ENCODE measurements at regions of chr4 and their contacts with region 1.

Region 1: GRCh38 chr4:80221161-80221560 is 23.9 kb downstream of the PRDM8 start:
- DNase-seq: peak; percentile 61
- ATAC-seq: peak; percentile 60; the same call in 1 of the 2 replicates
- H3K4me3 ChIP-seq: no peak overlapping the region
- H3K27ac ChIP-seq: no peak overlapping the region
- H3K4me1 ChIP-seq: peaks cover 2% of the 10 kb centered on the region; the same call in 1 of the 2 replicates
- H3K27me3 ChIP-seq: no peaks in the 10 kb centered on the region
- CTCF ChIP-seq: peak; percentile 54
- POLR2A ChIP-seq: no peak
- RAD21 ChIP-seq: peak; percentile 49

Region 2: DNA sequence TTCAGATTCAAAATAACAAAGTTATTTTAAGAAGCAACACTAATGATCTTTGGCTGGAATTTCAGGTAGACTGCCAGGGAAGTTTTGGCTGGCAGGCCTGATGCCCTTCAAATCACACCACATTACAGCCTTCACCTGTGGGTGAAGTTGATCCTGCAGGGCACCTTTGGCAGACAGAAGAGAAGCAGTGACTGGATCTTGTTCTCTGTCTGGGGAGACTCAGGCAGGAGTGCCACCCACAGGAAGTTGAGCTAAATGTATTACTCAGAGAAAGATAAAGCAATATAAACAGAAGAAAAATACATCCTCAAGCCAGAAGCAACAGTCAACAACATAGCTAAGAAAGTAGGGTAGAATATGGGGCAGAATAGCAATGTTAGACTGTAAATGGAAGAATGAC is 101.6 kb after region 1 on chr4:
- CTCF ChIA-PET with region 1: interaction called, 15 read pairs
- POLR2A ChIA-PET with region 1: no interaction called
- dilution Hi-C with region 1: no loop called
- in situ Hi-C with region 1: no loop called
- intact Hi-C with region 1: loop called (anchors 1 kb)
- DNase-seq: peak; percentile 68
- ATAC-seq: peak; percentile 97
- H3K4me3 ChIP-seq: no peak overlapping the region
- H3K27ac ChIP-seq: no peak overlapping the region
- H3K4me1 ChIP-seq: peaks cover 5% of the 10 kb centered on the region
- H3K27me3 ChIP-seq: no peaks in the 10 kb centered on the region
- CTCF ChIP-seq: peak; percentile 69
- POLR2A ChIP-seq: no peak
- RAD21 ChIP-seq: peak; percentile 74

Region 3: DNA sequence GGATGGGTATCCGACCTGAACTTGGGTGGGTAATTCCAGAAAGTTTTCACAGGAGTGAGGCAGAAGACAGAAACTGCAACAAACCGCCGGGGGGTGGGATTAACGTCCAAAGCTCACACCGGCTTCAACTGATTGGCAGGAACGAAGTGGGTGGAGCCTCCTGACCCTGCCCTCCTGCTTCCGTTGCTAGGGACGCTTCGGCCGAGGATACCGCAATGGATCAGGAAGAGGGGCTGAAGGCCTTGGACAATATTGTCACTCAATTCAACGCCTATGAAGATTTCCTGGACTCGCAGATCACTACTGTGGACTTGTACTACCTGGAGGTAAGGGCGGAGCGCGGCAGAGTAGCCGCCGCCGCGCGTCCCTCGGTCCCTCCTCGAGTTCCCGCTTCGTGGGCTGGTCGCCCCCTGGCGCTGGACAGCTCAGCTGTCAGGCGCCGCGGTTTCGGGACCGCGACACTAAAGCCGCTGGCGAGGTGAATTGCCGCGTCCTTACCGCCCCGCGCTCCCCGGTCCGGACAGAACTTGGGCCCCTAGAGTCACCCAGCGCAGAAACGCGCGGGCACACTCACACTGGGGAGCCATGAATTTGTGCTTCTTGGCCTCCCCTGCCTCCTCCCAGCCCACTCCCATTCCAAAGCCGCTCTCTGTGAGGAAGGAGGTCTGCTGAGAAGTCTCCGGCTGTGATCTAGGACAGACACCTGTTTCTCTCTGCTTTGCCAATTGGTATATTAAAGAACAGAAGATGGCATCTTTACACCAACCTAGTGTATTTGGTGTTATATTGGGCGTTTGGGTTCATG is 114.6 kb after region 1 on chr4 and contains the start of gene CFAP299:
- CTCF ChIA-PET with region 1: interaction called, 13 read pairs
- POLR2A ChIA-PET with region 1: no interaction called
- dilution Hi-C with region 1: no loop called
- in situ Hi-C with region 1: loop called (anchors 10 kb)
- intact Hi-C with region 1: loop called (anchors 5 kb)
- DNase-seq: peak; percentile 90
- ATAC-seq: peak; percentile 99
- H3K4me3 ChIP-seq: peak within 1 kb of the TSS; percentile 84
- H3K27ac ChIP-seq: no peak within 1 kb of the TSS
- H3K4me1 ChIP-seq: peaks cover 4% of the 10 kb centered on the region
- H3K27me3 ChIP-seq: no peaks in the 10 kb centered on the region
- CTCF ChIP-seq: peak; percentile 58
- POLR2A ChIP-seq: 0 out of 2 replicates have a peak, but pooled peaks have one; percentile 25
- RAD21 ChIP-seq: peak; percentile 59
- total RNA-seq, gene CFAP299: 1.1 and 1.9 TPM in 2 replicates

Region 4: DNA sequence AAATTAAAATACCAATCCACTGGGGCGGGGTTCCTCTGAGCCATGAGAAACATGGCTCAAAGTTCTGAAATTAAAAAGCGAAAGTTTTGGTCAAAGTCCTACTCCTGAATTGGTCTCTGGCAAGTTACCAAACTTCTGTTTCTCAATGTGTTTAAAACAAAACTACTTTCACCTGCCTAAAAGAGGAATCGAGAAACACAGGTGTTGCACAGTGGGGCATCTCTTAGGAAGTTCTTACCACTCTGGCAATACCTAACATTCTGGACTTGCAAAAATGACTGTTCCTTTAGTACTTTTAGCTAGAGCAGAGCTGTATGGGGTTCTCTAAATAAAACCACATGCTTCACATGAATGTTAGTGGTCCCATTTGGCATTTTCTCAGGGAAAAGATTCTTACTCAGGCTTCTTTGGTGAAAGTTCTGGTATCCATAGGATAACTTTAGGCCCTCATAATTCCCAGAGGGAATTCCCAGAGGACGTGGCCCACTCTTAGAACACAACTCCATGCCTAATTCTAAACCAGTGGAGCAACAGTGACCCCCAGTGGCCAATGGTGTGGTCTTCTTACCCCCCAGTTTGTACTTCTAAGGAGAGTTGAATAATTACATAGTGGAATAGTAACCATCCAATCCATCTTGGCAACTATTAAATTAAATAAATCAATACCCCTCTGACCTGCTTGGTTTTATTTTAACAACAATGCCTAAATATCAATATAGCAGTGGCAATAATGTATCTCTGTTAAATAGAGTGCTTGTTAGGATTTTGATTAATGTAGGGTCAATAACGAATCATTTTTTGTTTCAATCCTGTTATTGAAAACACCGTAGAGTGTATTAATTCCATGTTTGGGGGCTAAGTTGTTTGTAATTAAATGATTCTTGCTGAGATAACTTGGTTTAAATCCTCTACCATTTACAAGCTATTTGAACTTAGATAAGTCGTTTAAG is 831.2 kb after region 1 on chr4:
- CTCF ChIA-PET with region 1: no interaction called
- POLR2A ChIA-PET with region 1: no interaction called
- dilution Hi-C with region 1: no loop called
- in situ Hi-C with region 1: no loop called
- intact Hi-C with region 1: loop called (anchors 2 kb)
- DNase-seq: peak; percentile 74
- ATAC-seq: peak; percentile 98
- H3K4me3 ChIP-seq: no peak overlapping the region
- H3K27ac ChIP-seq: no peak overlapping the region
- H3K4me1 ChIP-seq: no peaks in the 10 kb centered on the region; the same call in 1 of the 2 replicates
- H3K27me3 ChIP-seq: peaks cover 7% of the 10 kb centered on the region
- CTCF ChIP-seq: peak; percentile 75
- POLR2A ChIP-seq: no peak
- RAD21 ChIP-seq: peak; percentile 80

Measured in IMR-90 (cell line).